GM12878 (cell line): ENCODE measurements at regions of chr16 and their contacts with region 1.

Region 1: DNA sequence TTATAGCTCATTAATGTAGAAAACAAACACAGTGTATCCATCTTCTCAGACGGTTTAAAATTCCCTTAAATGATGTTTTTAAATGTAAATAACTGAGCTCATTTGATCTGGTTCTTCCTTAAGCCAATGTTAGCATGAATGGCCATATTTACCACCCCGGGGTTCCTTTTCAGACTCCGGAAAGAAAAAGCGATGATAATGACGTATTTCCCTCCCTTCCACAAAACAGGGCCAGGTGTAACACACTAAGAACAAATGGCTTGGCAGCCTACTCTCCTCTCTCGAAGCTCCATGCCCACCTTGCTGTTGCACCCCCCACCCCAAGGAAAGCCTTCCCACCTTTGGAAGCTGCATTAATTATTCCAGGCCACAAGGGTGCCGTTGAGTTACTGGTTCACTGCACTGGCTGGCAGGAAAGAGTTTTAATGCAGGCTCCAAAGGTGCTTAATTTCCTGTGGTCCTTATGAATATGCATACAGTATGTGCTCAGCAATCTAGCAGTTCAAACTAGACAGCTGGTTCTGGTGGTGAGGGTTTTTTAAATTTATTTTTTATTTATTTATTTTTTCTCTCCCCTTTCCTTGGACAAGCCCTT is 378.9 kb downstream of the WWOX start:
- DNase-seq: no peak
- ATAC-seq: peak; percentile 39
- H3K4me3 ChIP-seq: no peak overlapping the region
- H3K27ac ChIP-seq: no peak overlapping the region
- H3K4me1 ChIP-seq: peaks cover 7% of the 10 kb centered on the region
- H3K27me3 ChIP-seq: no peaks in the 10 kb centered on the region
- CTCF ChIP-seq: peak; percentile 28 to 50 (median 35); a peak in 3 of 6 replicates
- EP300 ChIP-seq: no peak
- POLR2A ChIP-seq: no peak
- RAD21 ChIP-seq: peak; percentile 34

Region 2: DNA sequence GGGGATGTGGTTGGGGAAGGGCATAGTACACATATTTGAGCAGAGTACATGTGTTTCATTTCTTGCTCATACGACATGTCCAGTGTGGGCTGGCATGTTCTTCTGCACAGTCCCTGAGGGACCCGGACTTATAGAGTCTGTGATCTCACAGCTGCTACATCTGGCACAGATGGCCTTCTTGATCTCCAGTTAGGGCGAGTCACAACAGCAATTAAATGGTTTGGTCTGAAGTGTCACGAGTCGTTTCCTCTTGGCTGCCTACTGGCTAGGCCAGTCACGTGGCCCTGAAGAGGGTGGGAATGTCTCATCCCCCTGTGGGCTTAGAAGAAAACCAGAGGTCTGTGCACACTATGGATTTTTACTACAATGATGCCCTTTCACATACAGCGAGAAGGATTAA is 64.7 kb after region 1 on chr16:
- CTCF ChIA-PET with region 1: no interaction called
- POLR2A ChIA-PET with region 1: no interaction called
- RAD21 ChIA-PET with region 1: no interaction called
- SMC1A ChIA-PET with region 1: no interaction called
- in situ Hi-C with region 1: no loop called
- intact Hi-C with region 1: no loop called
- DNase-seq: no peak
- ATAC-seq: no peak
- H3K4me3 ChIP-seq: no peak overlapping the region
- H3K27ac ChIP-seq: no peak overlapping the region
- H3K4me1 ChIP-seq: no peaks in the 10 kb centered on the region
- H3K27me3 ChIP-seq: no peaks in the 10 kb centered on the region
- CTCF ChIP-seq: no peak
- EP300 ChIP-seq: no peak
- POLR2A ChIP-seq: no peak
- RAD21 ChIP-seq: no peak

Region 3: GRCh38 chr16:78570399-78571141 is 92.2 kb after region 1 on chr16:
- CTCF ChIA-PET with region 1: no interaction called
- POLR2A ChIA-PET with region 1: no interaction called
- RAD21 ChIA-PET with region 1: no interaction called
- SMC1A ChIA-PET with region 1: no interaction called
- in situ Hi-C with region 1: no loop called
- intact Hi-C with region 1: no loop called
- DNase-seq: no peak
- ATAC-seq: peak; percentile 82
- H3K4me3 ChIP-seq: no peak overlapping the region
- H3K27ac ChIP-seq: no peak overlapping the region
- H3K4me1 ChIP-seq: 0 out of 2 replicates have a peak, but pooled peaks cover 3% of the 10 kb centered on the region
- H3K27me3 ChIP-seq: no peaks in the 10 kb centered on the region
- CTCF ChIP-seq: no peak
- EP300 ChIP-seq: no peak
- POLR2A ChIP-seq: no peak
- RAD21 ChIP-seq: no peak

Region 4: DNA sequence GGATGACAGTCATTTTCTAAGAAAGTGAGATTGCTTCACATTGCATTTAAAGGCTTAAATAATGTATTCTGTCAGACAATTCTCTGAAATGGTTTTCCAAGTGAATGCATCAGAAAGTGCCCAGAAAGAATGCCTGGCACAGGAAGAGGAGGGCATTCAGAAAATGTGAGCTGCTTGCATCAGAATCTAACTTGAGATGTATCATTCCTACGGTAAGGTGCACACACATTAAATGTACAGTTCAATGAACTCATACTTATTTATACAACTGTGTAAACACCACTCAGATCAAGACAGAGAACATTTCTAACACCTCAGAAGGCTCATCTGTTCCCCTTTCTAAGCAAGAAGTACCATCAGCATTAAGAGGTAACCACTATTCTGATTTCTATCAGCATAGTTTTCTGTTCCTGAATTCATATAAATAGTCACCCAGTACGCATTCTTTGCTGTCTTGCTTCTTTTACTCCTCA is 484.1 kb after region 1 on chr16:
- CTCF ChIA-PET with region 1: no interaction called
- POLR2A ChIA-PET with region 1: no interaction called
- RAD21 ChIA-PET with region 1: no interaction called
- SMC1A ChIA-PET with region 1: no interaction called
- in situ Hi-C with region 1: no loop called
- intact Hi-C with region 1: loop called (anchors 10 kb)
- DNase-seq: peak; percentile 60
- ATAC-seq: peak; percentile 96
- H3K4me3 ChIP-seq: no peak overlapping the region
- H3K27ac ChIP-seq: peak overlapping the region; percentile 90
- H3K4me1 ChIP-seq: peaks cover 25% of the 10 kb centered on the region
- H3K27me3 ChIP-seq: no peaks in the 10 kb centered on the region
- CTCF ChIP-seq: no peak
- EP300 ChIP-seq: peak; percentile 93 to 95
- POLR2A ChIP-seq: no peak
- RAD21 ChIP-seq: no peak